ENCODE measurements at regions of chr12 and their contacts with region 1.

Region 1: DNA sequence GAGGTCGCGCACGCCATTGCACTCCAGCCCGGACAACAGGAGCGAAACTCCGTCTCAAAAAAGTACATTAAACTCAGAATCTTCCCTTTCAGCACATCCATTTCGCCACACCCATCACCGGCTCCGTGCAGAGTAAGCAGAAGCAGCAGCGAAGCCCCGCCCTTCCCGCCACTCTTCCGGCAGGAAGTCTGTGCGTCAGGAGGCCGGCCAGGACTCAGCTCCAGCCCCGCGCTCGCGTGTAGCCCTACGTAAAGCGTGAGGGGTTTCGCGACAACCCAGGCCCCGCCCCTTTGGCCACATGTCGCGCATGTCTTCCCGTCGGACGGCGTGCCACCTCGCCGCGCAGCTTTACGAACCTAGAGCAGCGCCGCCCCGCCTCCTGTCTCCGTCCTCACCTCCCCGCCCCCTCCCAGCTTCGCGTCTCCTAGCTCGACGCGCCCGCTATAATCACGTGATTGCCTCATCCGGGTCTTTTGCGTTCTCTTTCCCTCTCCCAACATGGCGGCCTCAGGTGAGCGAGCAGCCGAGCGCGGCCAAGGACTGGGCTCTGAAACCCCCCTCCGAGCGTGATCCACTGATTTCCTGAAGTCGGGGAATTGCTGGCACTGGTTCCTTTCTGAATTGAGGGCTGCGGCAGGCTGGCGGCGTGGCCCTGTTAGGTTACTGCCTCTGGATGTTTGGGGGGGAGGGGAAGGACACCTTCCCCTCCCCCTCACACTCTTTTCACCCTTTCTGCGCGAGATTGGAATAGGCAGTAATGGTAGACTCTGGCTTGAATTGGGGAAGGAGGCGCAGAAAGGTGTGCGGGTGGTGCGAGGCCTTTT is at the start of gene EIF4B:
- DNase-seq: peak; percentile 91 to 100 (median 93)
- ATAC-seq: peak; percentile 94
- H3K4me3 ChIP-seq: peak within 1 kb of the TSS; percentile 76
- H3K27ac ChIP-seq: peak within 1 kb of the TSS; percentile 97
- H3K4me1 ChIP-seq: peaks cover 8 to 30% of the 10 kb centered on the region in 2 experiments; a peak in 3 of 5 replicates
- H3K27me3 ChIP-seq: no peaks in the 10 kb centered on the region
- CTCF ChIP-seq: no peak
- EP300 ChIP-seq: no peak
- POLR2A ChIP-seq: peak; percentile 95
- RAD21 ChIP-seq: 0 out of 4 replicates have a peak, but pooled peaks of 1 of the 2 experiments have one; percentile 7
- polyA plus RNA-seq, gene EIF4B: 138 to 150 TPM

Region 2: GRCh38 chr12:52865090-52865944 is 140.9 kb before region 1 on chr12:
- CTCF ChIA-PET with region 1: no interaction called
- POLR2A ChIA-PET with region 1: no interaction called
- in situ Hi-C with region 1: no loop called
- intact Hi-C with region 1: no loop called
- DNase-seq: peak; percentile 72 to 75 (median 74)
- ATAC-seq: peak; percentile 86
- H3K4me3 ChIP-seq: no peak overlapping the region
- H3K27ac ChIP-seq: no peak overlapping the region
- H3K4me1 ChIP-seq: peaks cover 0 to 1% of the 10 kb centered on the region in 2 experiments; a peak in 2 of 5 replicates
- H3K27me3 ChIP-seq: peaks cover 2 to 14% of the 10 kb centered on the region in 2 experiments; a peak in 2 of 5 replicates
- CTCF ChIP-seq: peak; percentile 82 to 90 (median 89)
- EP300 ChIP-seq: no peak
- POLR2A ChIP-seq: no peak
- RAD21 ChIP-seq: peak; percentile 83 to 87

Region 3: GRCh38 chr12:52949413-52950331 is 56.5 kb before region 1 on chr12:
- CTCF ChIA-PET with region 1: no interaction called
- POLR2A ChIA-PET with region 1: no interaction called
- in situ Hi-C with region 1: no loop called
- intact Hi-C with region 1: loop called (anchors 2 kb)
- DNase-seq: peak; percentile 82 to 93 (median 86)
- ATAC-seq: peak; percentile 87
- H3K4me3 ChIP-seq: peak overlapping the region; percentile 99
- H3K27ac ChIP-seq: peak overlapping the region; percentile 100
- H3K4me1 ChIP-seq: peaks cover 47 to 58% of the 10 kb centered on the region in 2 experiments
- H3K27me3 ChIP-seq: no peaks in the 10 kb centered on the region
- CTCF ChIP-seq: no peak; a peak in 1 of 6 replicates
- EP300 ChIP-seq: peak; percentile 81
- POLR2A ChIP-seq: peak; percentile 96
- RAD21 ChIP-seq: no peak; a peak in 2 of 4 replicates

Region 4: DNA sequence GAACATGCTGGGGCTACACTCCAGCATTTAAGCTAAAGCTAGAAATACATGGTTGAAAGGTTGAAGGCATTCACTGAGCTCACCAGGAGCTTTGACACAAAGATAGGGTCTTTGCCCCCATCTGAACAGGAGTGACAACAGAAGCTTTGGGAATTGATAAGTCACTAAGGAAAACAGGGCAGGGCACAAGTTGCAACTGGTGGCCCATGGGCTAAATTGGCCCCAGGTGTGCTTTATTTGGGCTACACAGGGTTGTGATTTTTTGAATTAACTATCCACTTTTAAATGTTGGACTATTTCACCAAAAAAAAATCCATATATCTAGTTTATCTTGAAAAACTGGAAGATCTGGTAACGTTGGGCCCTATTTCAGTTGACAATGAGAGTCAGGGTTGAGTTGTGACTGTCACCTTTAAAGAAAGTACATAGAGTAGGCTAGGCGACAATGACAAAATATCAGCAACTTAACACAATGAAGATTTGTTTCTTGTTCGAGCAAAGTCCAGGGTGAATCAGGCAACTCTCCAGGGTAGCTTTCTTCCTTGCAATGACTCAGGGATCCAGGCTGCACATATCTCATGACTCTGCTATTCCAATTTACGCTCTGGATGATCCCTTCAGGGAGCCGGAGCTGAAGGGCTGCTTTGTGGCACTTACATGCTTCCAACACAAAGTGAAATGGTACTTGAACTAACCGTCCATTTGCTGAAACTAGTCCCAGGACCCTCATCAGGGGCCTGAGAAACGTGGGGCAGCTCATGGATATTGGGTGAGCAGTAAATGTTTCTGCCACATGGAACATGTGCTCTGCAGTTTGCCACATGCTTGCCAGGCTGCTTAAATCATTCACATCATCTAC is 13.3 kb before region 1 on chr12:
- CTCF ChIA-PET with region 1: no interaction called
- POLR2A ChIA-PET with region 1: interaction called, 16 read pairs
- in situ Hi-C with region 1: no loop called
- intact Hi-C with region 1: no loop called
- DNase-seq: peak; percentile 63 to 75 (median 68)
- ATAC-seq: peak; percentile 90
- H3K4me3 ChIP-seq: no peak overlapping the region
- H3K27ac ChIP-seq: peak overlapping the region; percentile 87
- H3K4me1 ChIP-seq: peaks cover 0 to 18% of the 10 kb centered on the region in 2 experiments; a peak in 3 of 5 replicates
- H3K27me3 ChIP-seq: no peaks in the 10 kb centered on the region
- CTCF ChIP-seq: no peak
- EP300 ChIP-seq: peak; percentile 18; the same call in 1 of the 2 replicates
- POLR2A ChIP-seq: peak; percentile 45; the same call in 1 of the 2 replicates
- RAD21 ChIP-seq: no peak

Region 5: GRCh38 chr12:53047221-53048042 is 41.2 kb after region 1 on chr12:
- CTCF ChIA-PET with region 1: interaction called, 3 read pairs
- POLR2A ChIA-PET with region 1: interaction called, 5 read pairs
- in situ Hi-C with region 1: no loop called
- intact Hi-C with region 1: loop called (anchors 5 kb)
- DNase-seq: peak; percentile 80 to 94 (median 94)
- ATAC-seq: peak; percentile 61
- H3K4me3 ChIP-seq: peak overlapping the region; percentile 67
- H3K27ac ChIP-seq: peak overlapping the region; percentile 88; the same call in 1 of the 3 replicates
- H3K4me1 ChIP-seq: peaks cover 60 to 73% of the 10 kb centered on the region in 2 experiments
- H3K27me3 ChIP-seq: no peaks in the 10 kb centered on the region
- CTCF ChIP-seq: peak in 2 of 3 experiments; percentile 42 to 55; a peak in 4 of 6 replicates
- EP300 ChIP-seq: no peak
- POLR2A ChIP-seq: no peak
- RAD21 ChIP-seq: peak in 1 of 2 experiments; percentile 20; a peak in 1 of 4 replicates

Region 6: DNA sequence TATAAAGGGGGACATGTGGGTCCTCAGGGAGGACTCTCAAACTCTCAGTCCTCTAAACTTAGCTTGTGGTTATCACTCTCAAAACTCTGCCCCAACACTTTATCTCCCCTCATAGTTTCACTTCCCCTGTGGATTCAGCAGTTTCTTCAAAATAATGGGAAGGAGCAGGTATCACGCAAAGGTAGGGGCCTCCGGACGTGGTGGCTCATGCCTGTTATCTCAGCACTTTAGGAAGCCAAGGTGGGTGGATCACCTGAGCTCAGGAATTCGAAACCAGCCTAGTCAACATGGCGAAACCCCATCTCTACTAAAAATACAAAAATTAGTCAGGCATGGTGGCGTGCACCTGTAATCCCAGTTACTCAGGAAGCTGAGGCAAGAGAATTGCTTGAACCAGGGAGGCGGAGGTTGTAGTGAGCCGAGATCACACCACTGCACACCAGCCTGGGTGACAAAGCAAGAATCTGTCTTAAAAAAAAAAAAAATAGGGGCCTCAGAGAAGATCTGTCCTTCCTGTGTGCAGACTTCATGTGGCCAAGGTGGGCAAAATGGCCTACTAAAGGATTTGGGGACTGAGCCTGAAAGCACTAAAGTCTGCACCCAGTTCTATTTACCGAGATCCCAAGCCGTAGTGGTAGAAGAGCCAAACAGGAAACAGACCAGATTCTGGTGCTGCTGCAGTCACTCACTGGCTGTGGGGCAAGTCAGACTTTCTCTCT is 194.4 kb after region 1 on chr12:
- CTCF ChIA-PET with region 1: no interaction called
- POLR2A ChIA-PET with region 1: no interaction called
- in situ Hi-C with region 1: no loop called
- intact Hi-C with region 1: no loop called
- DNase-seq: peak in 1 of 4 experiments; percentile 50
- ATAC-seq: peak; percentile 69
- H3K4me3 ChIP-seq: no peak overlapping the region
- H3K27ac ChIP-seq: peak overlapping the region; percentile 60
- H3K4me1 ChIP-seq: peaks cover 28 to 31% of the 10 kb centered on the region in 2 experiments; a peak in 4 of 5 replicates
- H3K27me3 ChIP-seq: no peaks in the 10 kb centered on the region
- CTCF ChIP-seq: no peak
- EP300 ChIP-seq: no peak
- POLR2A ChIP-seq: 0 out of 2 replicates have a peak, but pooled peaks have one; percentile 33
- RAD21 ChIP-seq: no peak

Measured in K562 (cell line).